Posterior cingulate gyrus (tissue), 11 donors: ENCODE measurements at regions of chr2 and their contacts with region 1.

Region 1: GRCh38 chr2:163345908-163346573 is 389.8 kb downstream of the FIGN start:
- DNase-seq: peak in 1 of 10 donors; percentile 43

Region 2: DNA sequence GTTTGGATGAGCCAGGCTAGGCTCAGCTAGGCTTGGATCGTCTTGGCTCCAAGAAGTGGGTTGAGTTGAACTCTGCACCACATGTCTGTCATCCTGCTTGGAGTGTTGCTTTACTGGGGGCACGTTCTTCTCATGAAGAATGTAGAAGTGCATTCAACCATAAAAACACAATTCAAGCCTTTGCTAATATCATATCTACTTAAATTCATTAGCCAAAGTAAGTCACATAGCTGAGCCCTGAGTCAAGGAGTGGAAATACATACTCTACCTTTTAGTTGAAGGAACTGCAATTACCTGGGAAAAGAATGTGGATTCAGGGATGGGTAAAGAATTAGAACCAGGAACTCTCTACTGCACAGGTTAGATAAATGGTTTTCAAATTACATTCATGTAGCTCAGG is 147.1 kb before region 1 on chr2:
- intact Hi-C with region 1: no loop called
- DNase-seq: no peak

Region 3: GRCh38 chr2:163610817-163611556 is 264.9 kb after region 1 on chr2:
- intact Hi-C with region 1: loop called (anchors 5 kb)
- DNase-seq: peak in 7 of 10 donors; percentile 14 to 86 (median 43)

Region 4: GRCh38 chr2:163943403-163944346 is 597.6 kb after region 1 on chr2:
- intact Hi-C with region 1: loop called (anchors 10 kb)
- DNase-seq: peak in 3 of 10 donors; percentile 5 to 48 (median 34)

Region 5: GRCh38 chr2:164430166-164430783 is 1084.2 kb after region 1 on chr2:
- intact Hi-C with region 1: loop called (anchors 2 kb)
- DNase-seq: peak in 4 of 10 donors; percentile 15 to 32 (median 24)